ENCODE measurements at regions of chr13 and their contacts with region 1.

Region 1: GRCh38 chr13:77480066-77480465 is 55.4 kb upstream of the SCEL start:
- DNase-seq: no peak
- H3K4me3 ChIP-seq: no peak overlapping the region
- H3K27ac ChIP-seq: no peak overlapping the region
- H3K4me1 ChIP-seq: no peaks in the 10 kb centered on the region; a peak in 1 of 4 replicates
- H3K27me3 ChIP-seq: no peaks in the 10 kb centered on the region
- CTCF ChIP-seq: no peak
- EP300 ChIP-seq: no peak
- RAD21 ChIP-seq: no peak

Region 2: DNA sequence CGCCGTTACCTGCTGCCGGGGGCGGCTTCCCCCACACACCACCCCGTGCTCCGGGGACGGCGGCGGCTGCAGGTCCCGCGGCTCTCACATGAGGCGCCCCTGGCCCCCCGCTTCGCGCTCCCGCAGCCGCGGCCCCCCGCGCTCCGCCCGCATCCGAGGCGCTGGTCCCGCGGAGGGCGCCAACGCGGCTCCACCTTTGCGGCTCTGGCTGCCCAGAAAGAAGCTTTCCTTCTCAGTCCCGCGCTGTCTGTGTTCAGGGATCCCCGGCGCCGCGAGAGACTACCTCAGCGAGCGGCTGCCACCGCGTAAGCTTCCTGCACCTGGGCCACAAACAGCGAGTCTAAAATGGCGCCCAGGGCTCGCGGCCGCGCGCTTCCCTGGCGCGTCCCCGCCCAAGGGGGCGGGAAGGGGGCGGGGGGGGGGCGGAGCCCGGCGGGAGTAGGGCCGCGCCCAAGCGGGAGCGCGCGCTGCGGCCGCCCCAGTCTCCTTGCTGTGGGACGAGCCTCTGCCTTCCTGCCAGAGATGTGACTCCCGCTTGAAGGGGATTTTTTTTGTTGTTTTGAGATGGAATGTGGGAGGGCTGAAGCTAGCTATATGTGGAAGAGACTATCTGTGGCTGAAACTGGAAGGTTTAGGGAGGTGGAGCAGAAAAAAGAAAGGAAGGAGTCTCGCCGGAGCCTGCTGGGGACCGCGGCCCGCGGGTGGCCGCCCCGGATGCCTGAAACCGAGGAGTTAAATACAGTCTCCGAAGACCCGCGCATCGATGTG is 453.1 kb before region 1 on chr13 and contains the start of gene FBXL3:
- CTCF ChIA-PET with region 1: interaction called, 18 read pairs
- POLR2A ChIA-PET with region 1: no interaction called
- DNase-seq: peak; percentile 97
- H3K4me3 ChIP-seq: peak within 1 kb of the TSS; percentile 87 to 92
- H3K27ac ChIP-seq: peak within 1 kb of the TSS; percentile 82 to 92
- H3K4me1 ChIP-seq: peaks cover 9 to 18% of the 10 kb centered on the region in 2 experiments; a peak in 3 of 4 replicates
- H3K27me3 ChIP-seq: no peaks in the 10 kb centered on the region
- CTCF ChIP-seq: no peak
- EP300 ChIP-seq: no peak
- RAD21 ChIP-seq: no peak
- polyA plus RNA-seq, gene FBXL3: 13.6 and 19.2 TPM in 2 replicates

Region 3: GRCh38 chr13:77329133-77329910 is 150.7 kb before region 1 on chr13:
- CTCF ChIA-PET with region 1: interaction called, 44 read pairs
- POLR2A ChIA-PET with region 1: interaction called, 8 read pairs
- DNase-seq: peak; percentile 78
- H3K4me3 ChIP-seq: peak overlapping the region; percentile 85 to 92
- H3K27ac ChIP-seq: peak overlapping the region; percentile 65 to 98
- H3K4me1 ChIP-seq: peaks cover 13 to 25% of the 10 kb centered on the region in 2 experiments; a peak in 3 of 4 replicates
- H3K27me3 ChIP-seq: no peaks in the 10 kb centered on the region
- CTCF ChIP-seq: no peak
- EP300 ChIP-seq: peak; percentile 22 to 30; a peak in 1 of 4 replicates
- RAD21 ChIP-seq: no peak

Region 4: DNA sequence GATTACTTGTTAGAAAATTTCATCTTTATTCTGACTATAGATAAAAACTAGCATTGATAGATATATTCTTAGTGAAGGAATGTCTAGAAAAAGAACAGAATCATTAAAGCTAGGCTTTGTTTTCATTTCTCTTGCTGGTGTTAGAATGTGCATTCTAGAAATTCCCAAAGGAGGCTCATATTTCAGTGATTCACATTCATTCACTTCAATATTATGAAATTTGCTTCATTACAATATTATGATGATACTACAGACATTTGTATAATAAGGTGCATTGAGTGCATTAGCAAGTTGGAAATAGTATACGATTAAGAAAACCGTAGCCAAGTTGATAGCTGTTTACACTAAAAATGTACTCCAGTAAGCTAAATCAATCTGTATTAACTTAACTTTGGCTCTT is 82.4 kb before region 1 on chr13:
- CTCF ChIA-PET with region 1: interaction called, 12 read pairs
- POLR2A ChIA-PET with region 1: no interaction called
- DNase-seq: no peak
- H3K4me3 ChIP-seq: no peak overlapping the region
- H3K27ac ChIP-seq: peak overlapping the region in 1 of 2 experiments; percentile 51; a peak in 1 of 4 replicates
- H3K4me1 ChIP-seq: no peaks in the 10 kb centered on the region
- H3K27me3 ChIP-seq: no peaks in the 10 kb centered on the region
- CTCF ChIP-seq: no peak
- EP300 ChIP-seq: no peak
- RAD21 ChIP-seq: no peak

Region 5: DNA sequence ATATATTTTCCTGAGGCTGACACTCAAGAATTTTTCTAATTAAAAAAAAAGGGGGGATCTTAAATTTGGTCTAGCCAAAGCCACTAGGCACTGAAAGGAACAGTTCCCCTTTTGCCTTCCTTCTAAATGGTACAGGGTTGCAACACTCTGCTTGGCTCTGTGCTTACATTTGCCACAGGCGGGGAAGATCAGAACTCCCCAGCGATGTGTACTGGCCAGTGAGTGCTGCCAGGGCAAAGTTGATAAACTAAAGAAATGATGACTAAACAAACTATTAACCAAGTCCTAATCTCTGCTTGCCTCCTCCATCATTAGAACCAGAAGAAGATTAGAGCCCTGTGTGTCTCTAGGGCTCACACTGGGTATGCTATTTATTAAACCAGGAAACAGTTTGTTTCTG is 19.9 kb before region 1 on chr13:
- CTCF ChIA-PET with region 1: interaction called, 34 read pairs
- POLR2A ChIA-PET with region 1: no interaction called
- DNase-seq: no peak
- H3K4me3 ChIP-seq: no peak overlapping the region
- H3K27ac ChIP-seq: no peak overlapping the region
- H3K4me1 ChIP-seq: no peaks in the 10 kb centered on the region; a peak in 1 of 4 replicates
- H3K27me3 ChIP-seq: no peaks in the 10 kb centered on the region
- CTCF ChIP-seq: no peak
- EP300 ChIP-seq: no peak
- RAD21 ChIP-seq: no peak

Region 6: GRCh38 chr13:77492982-77493381 is 12.9 kb after region 1 on chr13:
- CTCF ChIA-PET with region 1: interaction called, 30 read pairs
- POLR2A ChIA-PET with region 1: no interaction called
- DNase-seq: peak; percentile 26
- H3K4me3 ChIP-seq: no peak overlapping the region
- H3K27ac ChIP-seq: no peak overlapping the region
- H3K4me1 ChIP-seq: no peaks in the 10 kb centered on the region
- H3K27me3 ChIP-seq: peaks cover 6% of the 10 kb centered on the region; the same call in 1 of the 2 replicates
- CTCF ChIP-seq: peak; percentile 73
- EP300 ChIP-seq: no peak
- RAD21 ChIP-seq: peak; percentile 69